ENCODE measurements at regions of chr3 and their contacts with region 1.

Region 1: DNA sequence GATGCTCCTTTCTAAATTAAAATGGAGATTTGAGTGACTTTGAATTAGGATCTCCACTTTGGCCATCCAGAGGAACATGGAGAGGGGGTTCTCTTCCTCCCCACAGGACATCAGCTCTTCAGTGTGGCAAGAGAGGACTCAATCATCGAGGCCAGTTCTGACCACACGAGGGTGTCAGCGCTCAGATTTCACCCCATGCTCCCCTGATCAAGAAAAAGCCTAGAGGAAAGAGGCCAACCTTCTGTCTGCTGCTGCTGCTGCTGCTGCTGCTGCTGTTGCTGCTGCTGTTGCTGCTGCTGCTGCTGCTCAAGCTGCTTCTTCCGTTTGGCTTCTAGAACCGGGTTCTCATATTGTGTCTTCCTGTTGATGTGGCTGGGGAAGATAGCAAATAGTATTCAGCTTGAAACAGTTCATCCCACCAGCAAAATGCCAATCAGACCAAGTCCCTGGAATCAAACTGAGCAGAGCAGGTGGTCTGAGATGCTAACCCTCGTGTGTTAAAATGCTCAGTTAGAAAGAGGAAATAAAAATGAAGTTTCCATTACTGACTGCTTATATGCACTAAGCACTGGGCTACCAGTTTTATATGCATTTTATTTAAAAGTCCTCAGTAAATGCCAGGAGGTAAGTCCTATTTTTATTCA is 599.0 kb downstream of the MAGI1 start:
- DNase-seq: peak; percentile 27 to 69 (median 52)
- ATAC-seq: peak; percentile 97
- H3K4me3 ChIP-seq: no peak overlapping the region
- H3K27ac ChIP-seq: no peak overlapping the region
- H3K4me1 ChIP-seq: no peaks in the 10 kb centered on the region
- H3K27me3 ChIP-seq: no peaks in the 10 kb centered on the region
- CTCF ChIP-seq: peak; percentile 58 to 66 (median 64)
- EP300 ChIP-seq: no peak
- POLR2A ChIP-seq: no peak
- RAD21 ChIP-seq: peak; percentile 68 to 83

Region 2: GRCh38 chr3:65342084-65342683 is 97.6 kb before region 1 on chr3:
- CTCF ChIA-PET with region 1: no interaction called
- POLR2A ChIA-PET with region 1: no interaction called
- in situ Hi-C with region 1: no loop called
- intact Hi-C with region 1: loop called (anchors 1 kb)
- DNase-seq: peak; percentile 61 to 75 (median 62)
- ATAC-seq: peak; percentile 99
- H3K4me3 ChIP-seq: no peak overlapping the region
- H3K27ac ChIP-seq: no peak overlapping the region
- H3K4me1 ChIP-seq: peaks cover 0 to 6% of the 10 kb centered on the region in 2 experiments; a peak in 3 of 5 replicates
- H3K27me3 ChIP-seq: no peaks in the 10 kb centered on the region; a peak in 2 of 5 replicates
- CTCF ChIP-seq: peak; percentile 72 to 81 (median 72)
- EP300 ChIP-seq: no peak
- POLR2A ChIP-seq: no peak
- RAD21 ChIP-seq: peak; percentile 27 to 69

Region 3: GRCh38 chr3:65356331-65357286 is 83.2 kb before region 1 on chr3:
- CTCF ChIA-PET with region 1: no interaction called
- POLR2A ChIA-PET with region 1: no interaction called
- in situ Hi-C with region 1: no loop called
- intact Hi-C with region 1: no loop called
- DNase-seq: no peak
- ATAC-seq: no peak
- H3K4me3 ChIP-seq: no peak overlapping the region
- H3K27ac ChIP-seq: no peak overlapping the region
- H3K4me1 ChIP-seq: no peaks in the 10 kb centered on the region; a peak in 1 of 5 replicates
- H3K27me3 ChIP-seq: no peaks in the 10 kb centered on the region
- CTCF ChIP-seq: no peak
- EP300 ChIP-seq: no peak
- POLR2A ChIP-seq: no peak
- RAD21 ChIP-seq: no peak

Region 4: DNA sequence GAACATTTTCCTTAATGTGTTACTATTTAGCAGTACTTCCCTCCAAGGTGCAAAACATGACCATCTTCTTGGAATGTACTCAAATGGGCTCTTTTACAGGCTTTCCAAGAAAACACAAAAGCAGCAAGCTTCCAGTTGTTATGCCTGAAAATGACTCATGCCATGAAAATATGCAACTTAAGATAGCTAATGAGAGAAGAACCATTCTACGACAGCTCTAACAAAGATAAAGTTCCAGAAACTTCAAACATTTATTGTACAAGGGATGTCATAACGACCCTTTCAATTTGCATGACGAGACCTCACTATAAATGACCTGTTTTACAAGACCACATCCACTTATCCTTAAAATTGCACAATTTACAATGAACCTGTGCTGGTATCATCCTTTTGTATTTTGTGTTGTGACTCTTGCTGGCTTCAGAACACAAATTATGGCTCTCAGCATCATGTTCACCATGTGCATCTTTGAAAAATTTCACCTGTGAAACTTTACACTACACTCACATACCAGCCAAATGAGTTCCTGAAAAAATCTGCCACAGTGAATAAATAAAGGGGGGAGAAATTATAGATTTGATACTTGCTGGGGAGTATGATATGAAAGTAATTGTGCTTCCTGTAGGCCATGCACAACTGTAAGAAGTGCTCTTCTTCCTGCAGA is 165.2 kb after region 1 on chr3:
- CTCF ChIA-PET with region 1: no interaction called
- POLR2A ChIA-PET with region 1: no interaction called
- in situ Hi-C with region 1: no loop called
- intact Hi-C with region 1: no loop called
- DNase-seq: peak; percentile 25 to 79 (median 42)
- ATAC-seq: peak; percentile 58
- H3K4me3 ChIP-seq: no peak overlapping the region
- H3K27ac ChIP-seq: peak overlapping the region; percentile 67
- H3K4me1 ChIP-seq: peaks cover 3 to 45% of the 10 kb centered on the region in 2 experiments; a peak in 3 of 5 replicates
- H3K27me3 ChIP-seq: no peaks in the 10 kb centered on the region
- CTCF ChIP-seq: no peak
- EP300 ChIP-seq: peak; percentile 77; the same call in 1 of the 2 replicates
- POLR2A ChIP-seq: no peak
- RAD21 ChIP-seq: 0 out of 4 replicates have a peak, but pooled peaks of 1 of the 2 experiments have one; percentile 4

Region 5: DNA sequence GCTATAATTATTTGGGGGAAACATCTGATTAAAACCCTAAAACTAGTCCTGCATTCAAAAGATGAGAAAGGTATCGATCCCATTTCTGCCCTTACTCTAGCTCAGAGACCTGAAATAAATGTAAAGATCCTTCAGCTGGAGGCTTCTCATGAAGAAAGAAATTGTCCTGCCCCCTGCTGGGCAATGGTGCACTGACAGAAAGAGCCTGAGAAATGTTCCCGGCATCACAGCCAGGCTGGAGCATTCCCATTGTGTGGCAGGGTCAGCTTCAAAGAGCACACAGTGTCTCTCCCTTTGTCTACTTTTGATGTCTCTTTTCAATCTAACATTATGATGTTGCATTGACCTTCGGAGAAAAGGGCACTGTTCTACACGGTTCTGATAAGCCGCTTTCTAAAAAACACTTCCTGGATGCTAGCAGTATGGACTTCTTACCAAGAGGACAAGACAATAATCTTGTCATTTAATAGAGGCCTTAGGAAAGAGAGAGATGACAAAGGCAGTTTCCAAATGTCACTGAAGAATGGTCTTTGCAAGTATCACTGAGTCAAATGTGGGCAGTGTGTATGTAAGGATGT is 311.4 kb after region 1 on chr3:
- CTCF ChIA-PET with region 1: interaction called, 9 read pairs
- POLR2A ChIA-PET with region 1: no interaction called
- in situ Hi-C with region 1: no loop called
- intact Hi-C with region 1: loop called (anchors 5 kb)
- DNase-seq: peak; percentile 26 to 59 (median 40)
- ATAC-seq: peak; percentile 86
- H3K4me3 ChIP-seq: no peak overlapping the region
- H3K27ac ChIP-seq: no peak overlapping the region
- H3K4me1 ChIP-seq: no peaks in the 10 kb centered on the region
- H3K27me3 ChIP-seq: no peaks in the 10 kb centered on the region
- CTCF ChIP-seq: peak; percentile 52 to 67 (median 60)
- EP300 ChIP-seq: no peak
- POLR2A ChIP-seq: no peak
- RAD21 ChIP-seq: peak; percentile 40 to 64